Right cardiac atrium (tissue), 5 donors: ENCODE measurements at regions of chr11 and their contacts with region 1.

Region 1: DNA sequence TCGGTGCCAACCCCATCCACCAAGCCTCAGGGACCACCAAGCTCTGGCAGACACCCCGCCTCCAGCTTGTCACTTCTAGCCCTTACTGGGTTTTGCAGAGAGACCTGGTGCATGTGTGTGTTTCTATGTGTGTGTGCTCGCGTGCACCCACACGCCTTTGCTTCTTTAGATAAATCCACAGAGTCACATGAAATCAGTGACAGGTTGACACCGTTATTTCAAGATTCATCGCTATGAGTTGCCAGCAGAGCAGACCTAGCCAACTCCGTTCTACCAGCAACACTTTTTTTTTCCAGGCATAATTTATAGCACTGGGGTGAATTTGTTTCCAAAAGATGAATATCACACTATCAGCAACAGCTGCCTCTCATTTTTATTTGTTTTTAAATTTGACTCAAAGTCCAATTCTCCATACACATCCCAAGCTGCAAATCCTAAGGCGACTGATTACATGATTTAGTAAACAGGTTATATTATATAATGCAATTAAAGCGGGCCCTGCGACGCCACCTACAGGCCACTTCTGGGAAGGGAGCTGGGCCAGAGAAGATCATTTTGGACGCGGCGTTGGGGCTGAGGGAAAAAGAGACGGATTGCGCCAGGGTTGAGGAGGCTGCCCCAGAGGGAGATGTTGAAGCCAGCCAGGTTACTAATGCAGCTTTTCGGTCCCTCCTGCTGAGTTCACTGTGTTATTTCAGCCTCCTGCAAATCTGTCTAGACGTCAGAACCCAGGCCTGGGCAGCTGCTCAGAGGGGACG is 150.5 kb downstream of the FEZ1 start:
- DNase-seq: peak; percentile 83 to 94 (median 92)
- ATAC-seq: peak; percentile 78 to 83
- H3K4me3 ChIP-seq: no peak overlapping the region
- H3K27ac ChIP-seq: peak overlapping the region; percentile 54
- H3K4me1 ChIP-seq: peaks cover 7% of the 10 kb centered on the region
- H3K27me3 ChIP-seq: no peaks in the 10 kb centered on the region

Region 2: GRCh38 chr11:125102510-125102909 is 243.1 kb before region 1 on chr11:
- intact Hi-C with region 1: loop called in 2 of 4 experiments (anchors 10 kb)
- DNase-seq: no peak
- ATAC-seq: no peak
- H3K4me3 ChIP-seq: no peak overlapping the region
- H3K27ac ChIP-seq: no peak overlapping the region
- H3K4me1 ChIP-seq: no peaks in the 10 kb centered on the region
- H3K27me3 ChIP-seq: no peaks in the 10 kb centered on the region

Region 3: DNA sequence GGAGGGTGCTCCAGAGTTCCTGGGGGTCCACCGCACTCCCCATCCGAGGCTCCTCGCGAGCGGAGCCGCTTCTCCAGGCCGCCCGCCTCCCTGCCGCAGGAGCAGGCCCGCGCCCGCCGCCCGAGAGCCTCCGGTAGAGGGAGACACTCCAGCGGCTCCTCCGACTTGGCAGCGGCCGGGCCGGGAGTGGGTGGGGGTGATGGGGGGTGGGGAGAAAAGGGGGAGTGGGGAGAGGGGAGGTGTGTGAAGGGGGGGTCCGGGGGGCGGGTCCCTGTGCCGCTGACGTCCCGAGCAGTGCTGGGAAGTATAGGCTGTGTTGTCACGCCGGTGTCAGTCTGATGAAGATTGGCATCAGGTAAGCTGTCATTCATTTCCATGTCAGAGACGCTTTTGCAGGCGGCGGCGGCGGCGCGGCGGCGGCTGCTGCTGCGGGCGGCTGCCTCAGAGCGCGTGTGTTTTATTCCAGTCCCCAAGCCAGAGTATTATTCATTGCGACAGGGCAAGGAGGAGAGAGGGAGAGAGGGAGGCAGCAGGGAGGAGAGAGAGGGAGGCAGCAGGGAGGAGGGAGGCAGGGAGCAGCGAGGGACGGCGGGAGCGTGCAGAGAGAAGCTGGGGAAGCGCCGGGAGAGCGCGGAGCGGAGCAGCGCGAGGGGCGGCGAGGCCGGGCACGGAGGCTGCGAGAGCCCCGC is 181.0 kb before region 1 on chr11 and contains the start of gene PKNOX2:
- intact Hi-C with region 1: loop called (anchors 2 to 5 kb)
- DNase-seq: peak; percentile 84 to 94 (median 94)
- ATAC-seq: peak; percentile 79 to 84
- H3K4me3 ChIP-seq: peak within 1 kb of the TSS; percentile 72
- H3K27ac ChIP-seq: peak within 1 kb of the TSS; percentile 86
- H3K4me1 ChIP-seq: peaks cover 3% of the 10 kb centered on the region
- H3K27me3 ChIP-seq: no peaks in the 10 kb centered on the region
- total RNA-seq, gene PKNOX2: 12.5 to 20.2 (median 18.8) TPM

Region 4: DNA sequence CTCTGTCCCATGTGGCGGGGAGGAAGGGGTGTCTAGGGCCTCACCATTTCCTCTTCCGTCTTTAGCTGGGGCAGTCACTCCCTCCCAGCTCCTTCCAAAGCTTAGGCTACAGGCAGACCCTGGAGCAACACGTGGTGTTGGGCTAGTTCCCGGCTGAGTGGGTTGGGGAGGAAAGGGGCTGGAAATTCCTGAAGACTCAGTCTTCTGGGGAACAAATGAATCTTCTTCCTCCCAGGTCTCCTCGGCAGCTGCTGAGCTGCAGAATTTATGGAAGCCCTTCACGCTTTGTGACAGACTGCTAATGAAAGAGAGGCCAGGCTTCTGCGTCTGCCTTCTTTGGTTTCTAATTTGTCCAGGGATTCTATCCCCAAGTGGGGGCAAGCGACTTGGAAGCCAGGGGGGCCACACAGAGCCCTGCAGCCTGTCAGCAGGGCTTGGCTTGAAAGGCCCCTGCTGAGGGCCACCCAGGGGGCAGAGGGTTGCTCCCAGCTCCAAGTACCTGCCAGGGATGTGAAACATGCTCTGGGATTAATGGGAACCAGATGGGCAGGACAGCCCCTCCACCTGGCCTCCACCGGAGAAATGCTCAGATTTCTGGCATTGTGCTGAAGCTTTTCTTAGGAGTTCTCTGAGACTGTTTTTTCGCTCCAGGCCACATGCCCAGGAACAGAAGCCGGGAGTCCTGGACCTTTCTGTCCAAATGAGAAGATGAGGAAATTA is 57.9 kb before region 1 on chr11:
- intact Hi-C with region 1: no loop called
- DNase-seq: peak; percentile 51 to 67 (median 62)
- ATAC-seq: peak; percentile 69 to 88
- H3K4me3 ChIP-seq: no peak overlapping the region
- H3K27ac ChIP-seq: no peak overlapping the region
- H3K4me1 ChIP-seq: peaks cover 9% of the 10 kb centered on the region
- H3K27me3 ChIP-seq: no peaks in the 10 kb centered on the region